Prostate gland (tissue), 2 donors: ENCODE measurements at regions of chr20 and their contacts with region 1.

Region 1: GRCh38 chr20:50189681-50190582 is 698 bp upstream of the CEBPB start:
- DNase-seq: peak; percentile 88
- H3K4me3 ChIP-seq: peak overlapping the region; percentile 83 to 92
- H3K27ac ChIP-seq: peak overlapping the region; percentile 99
- H3K4me1 ChIP-seq: no peaks in the 10 kb centered on the region
- H3K27me3 ChIP-seq: no peaks in the 10 kb centered on the region
- CTCF ChIP-seq: peak; percentile 80 to 98 (median 88)
- POLR2A ChIP-seq: no peak

Region 2: GRCh38 chr20:50245498-50246356 is 55.8 kb after region 1 on chr20:
- intact Hi-C with region 1: no loop called
- DNase-seq: no peak
- H3K4me3 ChIP-seq: no peak overlapping the region
- H3K27ac ChIP-seq: peak overlapping the region; percentile 71 to 73
- H3K4me1 ChIP-seq: peaks cover 11% of the 10 kb centered on the region
- H3K27me3 ChIP-seq: no peaks in the 10 kb centered on the region
- CTCF ChIP-seq: no peak
- POLR2A ChIP-seq: no peak

Region 3: DNA sequence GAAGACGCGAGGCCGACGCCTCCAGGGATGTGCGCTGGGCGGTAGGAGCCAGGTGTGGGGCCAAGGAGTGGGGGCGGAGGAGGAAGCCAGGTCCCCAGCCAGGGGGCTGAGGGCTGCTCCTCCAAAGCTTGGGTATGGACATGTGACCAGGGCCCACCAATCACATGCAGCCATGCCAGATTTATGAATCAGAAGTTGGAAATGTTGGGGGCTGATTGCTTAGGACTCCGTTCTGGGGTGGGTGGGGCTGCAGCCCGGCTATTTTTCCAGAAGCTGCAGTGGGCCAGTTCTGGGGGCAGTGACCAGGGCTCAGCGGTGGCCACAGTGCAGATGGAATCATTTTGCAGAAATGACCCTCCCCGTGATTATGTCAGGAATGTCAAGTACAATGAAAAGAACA is 96.7 kb after region 1 on chr20:
- intact Hi-C with region 1: loop called (anchors 5 kb)
- DNase-seq: no peak
- H3K4me3 ChIP-seq: no peak overlapping the region
- H3K27ac ChIP-seq: peak overlapping the region; percentile 71 to 84
- H3K4me1 ChIP-seq: no peaks in the 10 kb centered on the region
- H3K27me3 ChIP-seq: no peaks in the 10 kb centered on the region
- CTCF ChIP-seq: no peak
- POLR2A ChIP-seq: no peak

Region 4: DNA sequence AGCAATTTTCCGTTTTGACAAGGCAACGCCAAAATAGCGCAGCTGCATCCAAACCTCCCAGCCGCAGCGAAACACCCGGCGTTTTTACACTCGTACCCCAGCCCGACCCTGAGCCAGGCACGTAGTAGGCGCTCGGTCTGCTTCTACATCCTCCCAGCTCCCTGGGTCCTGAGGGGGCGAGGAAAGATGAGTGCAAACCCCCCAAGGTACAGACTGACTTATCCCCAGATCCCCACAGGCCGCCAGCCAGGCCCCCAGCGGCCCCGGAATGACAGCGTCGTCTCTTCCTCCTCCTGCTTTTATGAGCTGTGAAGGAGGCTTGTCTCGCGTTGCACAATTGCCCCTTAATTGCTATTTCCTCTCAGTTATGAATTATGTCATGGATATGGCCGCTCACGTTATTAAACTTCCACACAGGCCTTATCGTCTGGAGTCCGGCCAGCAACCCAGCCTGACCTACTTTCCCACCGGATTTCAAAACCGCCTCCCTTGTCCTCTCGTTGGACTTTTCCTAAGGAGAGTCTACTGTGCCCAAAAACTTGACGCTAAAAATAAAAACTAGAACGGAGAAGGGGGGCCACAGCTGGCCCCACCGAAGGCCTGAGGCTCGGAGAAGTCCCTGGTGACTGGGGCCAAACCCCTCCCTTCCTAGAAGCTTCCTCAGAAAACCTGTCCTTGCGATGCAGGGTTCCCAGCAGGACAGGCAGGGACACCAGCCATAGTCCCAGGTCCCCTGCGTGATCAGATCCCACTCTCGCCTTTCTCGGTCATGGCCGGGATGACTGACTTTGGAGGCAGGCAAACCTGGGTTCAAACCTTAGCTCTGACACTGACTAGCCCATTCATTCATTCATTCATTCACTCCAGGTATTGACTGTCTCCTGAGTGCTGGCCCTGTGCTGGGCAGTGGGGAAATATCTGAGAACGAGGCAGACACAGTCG is 189.4 kb after region 1 on chr20:
- intact Hi-C with region 1: loop called (anchors 2 kb)
- DNase-seq: peak; percentile 76
- H3K4me3 ChIP-seq: no peak overlapping the region
- H3K27ac ChIP-seq: peak overlapping the region; percentile 73 to 80
- H3K4me1 ChIP-seq: peaks cover 8% of the 10 kb centered on the region
- H3K27me3 ChIP-seq: no peaks in the 10 kb centered on the region
- CTCF ChIP-seq: no peak
- POLR2A ChIP-seq: no peak

Region 5: GRCh38 chr20:50460460-50461267 is 270.7 kb after region 1 on chr20:
- intact Hi-C with region 1: loop called (anchors 1 kb)
- DNase-seq: peak; percentile 84
- H3K4me3 ChIP-seq: no peak overlapping the region
- H3K27ac ChIP-seq: peak overlapping the region; percentile 13 to 51
- H3K4me1 ChIP-seq: no peaks in the 10 kb centered on the region
- H3K27me3 ChIP-seq: no peaks in the 10 kb centered on the region
- CTCF ChIP-seq: peak; percentile 91 to 98 (median 96)
- POLR2A ChIP-seq: no peak

Region 6: DNA sequence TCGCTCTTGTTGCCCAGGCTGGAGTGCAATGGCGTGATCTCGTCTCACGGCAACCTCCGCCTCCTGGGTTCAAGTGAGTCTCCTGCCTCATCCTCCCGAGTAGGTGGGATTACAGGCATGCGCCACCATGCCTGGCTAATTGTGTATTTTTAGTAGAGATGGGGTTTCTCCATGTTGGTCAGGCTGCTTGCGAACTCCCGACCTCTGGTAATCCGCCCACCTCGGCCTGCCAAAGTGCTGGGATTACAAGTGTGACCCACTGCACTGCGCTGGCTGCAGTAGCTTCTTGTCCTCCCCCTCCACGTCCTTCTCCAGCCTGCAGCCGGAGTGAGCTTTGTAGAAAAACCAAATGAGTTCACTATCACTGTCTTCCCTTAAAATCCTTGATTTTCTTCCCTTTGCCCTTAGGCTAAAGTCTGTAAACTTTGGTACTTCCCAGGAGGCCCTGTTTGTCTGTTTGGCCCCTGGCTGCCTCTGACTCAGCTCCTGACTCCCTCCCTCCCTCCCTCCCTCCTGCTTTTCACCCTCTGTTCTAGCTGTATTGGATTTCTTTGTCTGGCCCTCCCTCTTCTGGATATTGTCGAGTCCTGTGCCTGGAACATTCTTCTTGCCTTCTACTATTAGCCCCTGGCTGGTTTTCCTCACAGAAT is 554.3 kb after region 1 on chr20:
- intact Hi-C with region 1: loop called (anchors 5 kb)
- DNase-seq: peak; percentile 67
- H3K4me3 ChIP-seq: no peak overlapping the region
- H3K27ac ChIP-seq: peak overlapping the region; percentile 71 to 76
- H3K4me1 ChIP-seq: peaks cover 3% of the 10 kb centered on the region
- H3K27me3 ChIP-seq: no peaks in the 10 kb centered on the region
- CTCF ChIP-seq: peak in 2 of 4 experiments; percentile 38 to 42
- POLR2A ChIP-seq: no peak